ENCODE measurements at regions of chr14 and their contacts with region 1.

Region 1: GRCh38 chr14:25537846-25538455 is 488.0 kb upstream of the STXBP6 start:
- DNase-seq: peak; percentile 75
- ATAC-seq: peak; percentile 97
- H3K4me3 Mint-ChIP-seq: no peak overlapping the region
- H3K27ac Mint-ChIP-seq: no peak overlapping the region
- H3K4me1 Mint-ChIP-seq: no peaks in the 10 kb centered on the region
- H3K27me3 Mint-ChIP-seq: no peaks in the 10 kb centered on the region
- CTCF ChIP-seq: peak; percentile 65

Region 2: DNA sequence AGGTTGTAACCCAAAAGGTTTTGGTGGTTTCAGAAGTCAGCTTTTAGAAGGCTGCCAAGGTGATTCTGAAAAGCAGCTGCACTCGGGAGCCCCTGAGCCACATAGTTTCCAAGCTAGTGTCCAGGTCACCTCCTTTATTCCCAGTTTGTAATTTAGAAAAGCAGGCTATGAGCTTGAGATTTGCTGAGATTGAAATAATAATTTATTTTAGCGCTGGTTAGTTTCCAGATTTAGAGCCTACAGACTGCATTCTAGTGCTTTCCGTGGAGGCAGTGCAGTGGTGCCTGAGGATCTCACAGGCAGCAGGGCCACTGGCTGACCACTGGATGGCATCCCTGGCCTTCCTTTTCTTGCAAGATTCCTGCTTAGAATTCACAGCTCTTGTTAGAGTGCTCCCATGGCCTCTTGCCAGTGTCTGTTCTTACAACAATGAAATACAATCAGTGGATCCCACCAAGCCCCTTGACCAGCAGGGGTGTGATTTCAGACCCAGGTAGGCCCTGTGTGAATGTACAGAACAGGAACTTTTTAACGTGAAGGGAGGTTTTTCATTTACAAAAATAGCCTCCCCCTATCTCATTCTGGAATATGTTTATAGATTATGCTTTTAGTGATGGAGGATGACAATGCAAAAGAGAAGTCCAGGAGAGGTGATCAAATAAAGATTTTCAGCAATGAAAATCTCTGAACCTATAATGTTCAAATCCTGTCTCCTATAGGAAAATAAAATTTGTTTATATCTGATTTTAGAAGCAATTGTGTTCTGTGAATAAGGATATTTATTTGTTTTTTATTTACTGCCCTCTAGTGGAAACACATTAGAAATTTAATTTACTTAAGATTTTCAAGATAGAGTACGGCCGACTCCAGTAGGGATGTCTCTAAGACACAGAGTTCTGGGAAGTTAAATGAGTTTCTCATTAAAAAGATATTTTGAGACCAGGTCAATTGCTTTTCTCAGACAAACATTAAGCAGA is 125.9 kb before region 1 on chr14:
- CTCF ChIA-PET with region 1: interaction called, 36 read pairs
- POLR2A ChIA-PET with region 1: no interaction called
- DNase-seq: peak; percentile 50
- ATAC-seq: peak; percentile 96
- H3K4me3 Mint-ChIP-seq: no peak overlapping the region
- H3K27ac Mint-ChIP-seq: no peak overlapping the region
- H3K4me1 Mint-ChIP-seq: peaks cover 2% of the 10 kb centered on the region; the same call in 1 of the 2 replicates
- H3K27me3 Mint-ChIP-seq: peaks cover 3% of the 10 kb centered on the region; the same call in 1 of the 2 replicates
- CTCF ChIP-seq: no peak; the same call in 1 of the 2 replicates

Region 3: GRCh38 chr14:25431211-25432048 is 106.5 kb before region 1 on chr14:
- CTCF ChIA-PET with region 1: interaction called, 57 read pairs
- POLR2A ChIA-PET with region 1: interaction called, 3 read pairs
- DNase-seq: peak; percentile 69
- ATAC-seq: peak; percentile 92
- H3K4me3 Mint-ChIP-seq: no peak overlapping the region
- H3K27ac Mint-ChIP-seq: no peak overlapping the region
- H3K4me1 Mint-ChIP-seq: peaks cover 11% of the 10 kb centered on the region
- H3K27me3 Mint-ChIP-seq: no peaks in the 10 kb centered on the region
- CTCF ChIP-seq: peak; percentile 49; the same call in 1 of the 2 replicates

Region 4: GRCh38 chr14:25522116-25522515 is 15.8 kb before region 1 on chr14:
- CTCF ChIA-PET with region 1: interaction called, 29 read pairs
- POLR2A ChIA-PET with region 1: no interaction called
- DNase-seq: no peak
- ATAC-seq: no peak
- H3K4me3 Mint-ChIP-seq: no peak overlapping the region
- H3K27ac Mint-ChIP-seq: no peak overlapping the region
- H3K4me1 Mint-ChIP-seq: peaks cover 19% of the 10 kb centered on the region
- H3K27me3 Mint-ChIP-seq: no peaks in the 10 kb centered on the region
- CTCF ChIP-seq: no peak

Region 5: GRCh38 chr14:25551674-25552073 is 13.7 kb after region 1 on chr14:
- CTCF ChIA-PET with region 1: interaction called, 11 read pairs
- POLR2A ChIA-PET with region 1: interaction called, 3 read pairs
- DNase-seq: no peak
- ATAC-seq: no peak
- H3K4me3 Mint-ChIP-seq: no peak overlapping the region
- H3K27ac Mint-ChIP-seq: no peak overlapping the region
- H3K4me1 Mint-ChIP-seq: peaks cover 32% of the 10 kb centered on the region
- H3K27me3 Mint-ChIP-seq: no peaks in the 10 kb centered on the region; the same call in 1 of the 2 replicates
- CTCF ChIP-seq: no peak

Measured in WTC11 (cell line).